Sciatic nerve (tissue), 2 donors: ENCODE measurements at regions of chr14 and their contacts with region 1.

Region 1: DNA sequence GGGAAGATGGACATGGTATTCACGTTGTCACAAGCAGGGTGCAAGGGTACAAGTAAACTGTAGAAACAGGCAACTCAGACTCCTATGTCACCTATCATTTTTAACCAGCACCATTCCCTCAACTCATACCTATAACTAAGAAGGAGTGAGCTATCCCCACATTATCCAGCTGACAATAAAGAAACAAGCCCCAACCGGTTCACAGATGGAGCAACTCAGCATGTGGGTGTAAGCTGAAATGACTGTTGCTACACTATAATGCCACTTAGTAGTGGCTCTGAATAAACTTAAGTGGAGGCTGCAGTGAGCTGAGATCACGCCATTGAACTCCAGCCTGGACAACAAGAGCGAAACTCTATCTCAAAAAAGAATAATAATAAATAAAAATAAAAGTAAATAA is 829.5 kb upstream of the MDGA2 start:
- DNase-seq: no peak
- ATAC-seq: no peak

Region 2: GRCh38 chr14:49820176-49820575 is 1315.3 kb after region 1 on chr14:
- intact Hi-C with region 1: no loop called
- DNase-seq: no peak
- ATAC-seq: no peak

Region 3: GRCh38 chr14:49934646-49935045 is 1429.7 kb after region 1 on chr14:
- intact Hi-C with region 1: loop called (anchors 10 kb)
- DNase-seq: no peak
- ATAC-seq: no peak